Activated CD8-positive, alpha-beta T cell treated with anti-CD3 and anti-CD28 coated beads, Interleukin-2, amount 10 ng/mL, durations not matched to agents 7 days and 5 days (primary cell): ENCODE measurements at regions of chr2 and their contacts with region 1.

Region 1: GRCh38 chr2:64831134-64831976 is 157.8 kb upstream of the SLC1A4 start:
- DNase-seq: peak; percentile 86
- ATAC-seq: peak; percentile 87
- H3K4me3 Mint-ChIP-seq: peak overlapping the region; percentile 22
- H3K27ac Mint-ChIP-seq: peak overlapping the region; percentile 63
- H3K4me1 Mint-ChIP-seq: peaks cover 22% of the 10 kb centered on the region
- H3K27me3 Mint-ChIP-seq: peaks cover 16% of the 10 kb centered on the region

Region 2: DNA sequence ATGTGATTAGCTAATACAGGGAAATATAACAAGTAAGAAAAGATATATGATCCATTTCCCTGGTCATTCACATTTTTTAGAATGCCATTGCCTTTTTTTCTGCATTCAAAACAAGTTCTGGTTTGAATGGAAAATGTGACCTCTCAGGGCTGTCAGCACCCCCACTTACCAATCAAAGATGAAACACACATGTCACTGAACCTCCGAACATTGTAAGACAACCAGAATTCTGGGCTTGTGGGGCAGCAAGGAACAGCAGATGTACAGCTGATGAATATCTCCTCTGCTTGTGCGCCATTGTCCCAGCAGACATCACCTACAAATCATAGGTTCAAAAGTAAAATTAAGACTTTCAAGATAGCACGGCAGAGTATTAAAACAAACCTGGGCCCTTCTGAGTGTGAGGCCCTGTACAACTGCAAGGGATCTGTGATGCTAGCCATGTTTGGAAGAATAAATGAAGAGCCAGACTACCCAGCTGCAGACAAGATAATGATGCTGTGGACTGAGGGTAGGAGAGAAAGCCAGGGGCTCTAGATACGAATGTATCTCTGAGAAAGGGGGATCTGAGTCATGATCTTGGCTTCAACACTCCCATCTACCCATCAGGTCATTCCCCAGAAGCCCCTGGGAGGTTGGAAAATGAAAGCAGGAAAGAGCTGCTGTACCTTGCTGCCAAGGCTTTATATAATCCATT is 68.9 kb before region 1 on chr2:
- CTCF ChIA-PET with region 1: interaction called, 12 read pairs
- POLR2A ChIA-PET with region 1: interaction called, 3 read pairs
- DNase-seq: no peak
- ATAC-seq: no peak
- H3K4me3 Mint-ChIP-seq: no peak overlapping the region
- H3K27ac Mint-ChIP-seq: no peak overlapping the region
- H3K4me1 Mint-ChIP-seq: peaks cover 33% of the 10 kb centered on the region
- H3K27me3 Mint-ChIP-seq: no peaks in the 10 kb centered on the region

Region 3: GRCh38 chr2:64767670-64768468 is 63.5 kb before region 1 on chr2:
- CTCF ChIA-PET with region 1: interaction called, 12 read pairs
- POLR2A ChIA-PET with region 1: interaction called, 3 read pairs
- DNase-seq: peak; percentile 89
- ATAC-seq: peak; percentile 87
- H3K4me3 Mint-ChIP-seq: peak overlapping the region; percentile 81
- H3K27ac Mint-ChIP-seq: peak overlapping the region; percentile 92
- H3K4me1 Mint-ChIP-seq: peaks cover 34% of the 10 kb centered on the region
- H3K27me3 Mint-ChIP-seq: peaks cover 4% of the 10 kb centered on the region

Region 4: GRCh38 chr2:64773461-64774118 is 57.8 kb before region 1 on chr2:
- CTCF ChIA-PET with region 1: interaction called, 12 read pairs
- POLR2A ChIA-PET with region 1: no interaction called
- DNase-seq: no peak
- ATAC-seq: no peak
- H3K4me3 Mint-ChIP-seq: no peak overlapping the region
- H3K27ac Mint-ChIP-seq: no peak overlapping the region
- H3K4me1 Mint-ChIP-seq: peaks cover 22% of the 10 kb centered on the region
- H3K27me3 Mint-ChIP-seq: peaks cover 4% of the 10 kb centered on the region

Region 5: GRCh38 chr2:64819774-64820696 is 11.3 kb before region 1 on chr2:
- CTCF ChIA-PET with region 1: interaction called, 42 read pairs
- POLR2A ChIA-PET with region 1: interaction called, 4 read pairs
- DNase-seq: peak; percentile 67
- ATAC-seq: peak; percentile 92
- H3K4me3 Mint-ChIP-seq: peak overlapping the region; percentile 61
- H3K27ac Mint-ChIP-seq: peak overlapping the region; percentile 90
- H3K4me1 Mint-ChIP-seq: peaks cover 35% of the 10 kb centered on the region
- H3K27me3 Mint-ChIP-seq: no peaks in the 10 kb centered on the region

Region 6: DNA sequence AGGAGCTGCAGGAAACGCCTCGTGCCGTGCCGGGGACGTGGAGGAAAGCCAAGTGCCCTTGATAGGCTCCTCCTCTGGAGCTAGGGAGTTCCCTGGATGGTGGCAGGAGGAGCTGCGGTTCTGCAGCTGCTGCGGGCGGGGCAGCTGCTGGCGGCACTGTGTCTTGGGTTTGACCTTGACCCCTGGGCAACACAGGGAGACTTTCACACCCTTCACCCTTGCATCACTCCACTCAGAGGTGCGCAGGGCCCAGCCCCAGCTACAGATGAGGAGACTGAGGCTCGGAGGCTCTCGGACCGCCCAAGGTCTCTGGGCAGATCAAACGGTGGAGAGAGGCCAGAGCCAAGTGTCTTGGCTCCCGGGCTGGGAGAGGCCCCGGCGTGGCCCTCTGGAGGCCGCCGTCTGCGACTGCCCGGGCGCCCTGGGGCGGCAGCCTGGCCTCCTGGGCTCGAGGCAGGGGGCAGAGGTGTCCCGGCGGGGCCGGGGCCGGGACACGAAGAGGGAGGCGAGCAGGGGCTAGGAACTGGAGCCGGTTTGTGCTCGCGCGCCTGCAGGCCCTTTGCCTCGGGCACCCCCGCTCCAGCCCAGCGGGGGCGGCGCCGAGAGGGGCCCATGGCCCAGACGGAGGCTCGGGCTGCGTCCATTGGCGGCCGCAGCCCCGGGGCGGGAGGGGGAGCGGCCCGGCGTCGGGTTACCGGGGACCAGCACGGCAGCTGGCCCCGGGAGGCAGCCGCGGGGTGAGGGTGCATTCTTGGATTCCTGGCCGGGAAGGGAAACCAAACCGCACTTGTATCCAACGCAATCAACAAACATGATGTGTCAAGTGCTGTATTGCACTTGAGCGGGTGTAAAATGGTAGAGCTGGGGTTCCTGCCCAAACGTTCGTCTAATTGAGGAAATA is 28.2 kb after region 1 on chr2:
- CTCF ChIA-PET with region 1: interaction called, 10 read pairs
- POLR2A ChIA-PET with region 1: no interaction called
- DNase-seq: no peak
- ATAC-seq: no peak
- H3K4me3 Mint-ChIP-seq: no peak overlapping the region
- H3K27ac Mint-ChIP-seq: no peak overlapping the region
- H3K4me1 Mint-ChIP-seq: peaks cover 6% of the 10 kb centered on the region
- H3K27me3 Mint-ChIP-seq: no peaks in the 10 kb centered on the region

Region 7: GRCh38 chr2:64881037-64881492 is 49.7 kb after region 1 on chr2:
- CTCF ChIA-PET with region 1: no interaction called
- POLR2A ChIA-PET with region 1: no interaction called
- DNase-seq: no peak
- ATAC-seq: peak; percentile 23
- H3K4me3 Mint-ChIP-seq: no peak overlapping the region
- H3K27ac Mint-ChIP-seq: no peak overlapping the region
- H3K4me1 Mint-ChIP-seq: peaks cover 9% of the 10 kb centered on the region
- H3K27me3 Mint-ChIP-seq: peaks cover 12% of the 10 kb centered on the region

Region 8: GRCh38 chr2:64978514-64979268 is 147.3 kb after region 1 on chr2:
- CTCF ChIA-PET with region 1: no interaction called
- POLR2A ChIA-PET with region 1: no interaction called
- DNase-seq: no peak
- ATAC-seq: peak; percentile 42
- H3K4me3 Mint-ChIP-seq: no peak overlapping the region
- H3K27ac Mint-ChIP-seq: no peak overlapping the region
- H3K4me1 Mint-ChIP-seq: peaks cover 39% of the 10 kb centered on the region
- H3K27me3 Mint-ChIP-seq: peaks cover 12% of the 10 kb centered on the region